Endothelial cell of umbilical vein (primary cell): ENCODE measurements at regions of chr1 and their contacts with region 1.

Region 1: GRCh38 chr1:205141236-205142101 is 19.7 kb upstream of the RBBP5 start:
- DNase-seq: peak; percentile 84
- H3K4me3 ChIP-seq: no peak overlapping the region
- H3K27ac ChIP-seq: no peak overlapping the region
- H3K4me1 ChIP-seq: peaks cover 19% of the 10 kb centered on the region
- H3K27me3 ChIP-seq: no peaks in the 10 kb centered on the region
- CTCF ChIP-seq: peak; percentile 77
- POLR2A ChIP-seq: no peak

Region 2: DNA sequence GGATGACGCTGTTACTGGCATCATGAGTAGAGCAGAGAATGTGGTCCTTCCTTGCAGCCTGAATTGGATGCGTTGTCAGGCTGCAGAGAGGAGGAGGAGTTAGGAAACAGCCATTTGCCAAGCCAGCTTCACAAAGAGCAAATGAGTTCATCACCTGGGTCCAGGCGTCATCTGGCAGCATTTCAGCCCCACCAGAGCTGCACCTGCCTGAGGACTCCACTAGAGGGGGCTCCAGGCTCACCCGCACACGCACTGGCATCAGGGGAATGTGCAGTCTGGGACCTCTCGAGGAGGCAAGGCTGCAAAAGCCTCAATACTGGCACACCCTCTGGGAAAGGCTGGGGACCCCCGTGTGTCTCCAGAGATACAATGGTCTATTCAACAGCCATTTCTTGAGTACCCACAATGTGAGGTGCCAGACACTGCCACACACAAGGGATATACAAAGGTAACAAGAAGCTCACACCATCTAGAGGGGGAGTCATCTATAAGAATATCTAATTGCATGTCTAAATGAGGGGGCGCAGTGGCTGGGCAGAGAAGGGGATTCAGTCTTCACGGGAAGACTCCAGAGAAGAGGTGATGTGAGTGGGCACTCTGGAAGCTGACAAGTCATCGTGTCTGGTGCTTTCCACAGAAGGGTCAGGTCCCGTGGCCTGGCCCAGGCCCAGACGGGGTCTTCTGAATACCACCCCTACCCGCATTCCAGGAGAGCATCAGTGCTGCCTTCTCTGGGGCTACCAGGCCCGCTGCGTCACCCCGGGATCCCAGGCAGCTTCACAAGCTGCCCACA is 152.0 kb before region 1 on chr1:
- CTCF ChIA-PET with region 1: interaction called, 21 read pairs
- POLR2A ChIA-PET with region 1: no interaction called
- dilution Hi-C with region 1: no loop called
- intact Hi-C with region 1: loop called (anchors 1 kb)
- DNase-seq: peak; percentile 76
- H3K4me3 ChIP-seq: no peak overlapping the region
- H3K27ac ChIP-seq: no peak overlapping the region
- H3K4me1 ChIP-seq: no peaks in the 10 kb centered on the region
- H3K27me3 ChIP-seq: peaks cover 0 to 19% of the 10 kb centered on the region in 2 experiments
- CTCF ChIP-seq: peak; percentile 92 to 98
- POLR2A ChIP-seq: no peak

Region 3: GRCh38 chr1:205162301-205162700 is 20.8 kb after region 1 on chr1:
- CTCF ChIA-PET with region 1: interaction called, 17 read pairs
- POLR2A ChIA-PET with region 1: no interaction called
- dilution Hi-C with region 1: no loop called
- intact Hi-C with region 1: no loop called
- DNase-seq: no peak
- H3K4me3 ChIP-seq: no peak overlapping the region
- H3K27ac ChIP-seq: no peak overlapping the region
- H3K4me1 ChIP-seq: no peaks in the 10 kb centered on the region
- H3K27me3 ChIP-seq: no peaks in the 10 kb centered on the region
- CTCF ChIP-seq: no peak
- POLR2A ChIP-seq: no peak

Region 4: GRCh38 chr1:205211169-205211838 is 69.8 kb after region 1 on chr1 and contains the start of gene DSTYK:
- CTCF ChIA-PET with region 1: interaction called, 7 read pairs
- POLR2A ChIA-PET with region 1: no interaction called
- dilution Hi-C with region 1: no loop called
- intact Hi-C with region 1: loop called (anchors 1 kb)
- DNase-seq: peak; percentile 95
- H3K4me3 ChIP-seq: peak within 1 kb of the TSS; percentile 81 to 90 (median 89)
- H3K27ac ChIP-seq: peak within 1 kb of the TSS; percentile 14
- H3K4me1 ChIP-seq: peaks cover 7% of the 10 kb centered on the region
- H3K27me3 ChIP-seq: peaks cover 9 to 15% of the 10 kb centered on the region in 2 experiments
- CTCF ChIP-seq: no peak
- POLR2A ChIP-seq: peak; percentile 54
- total RNA-seq, gene DSTYK: 8.1 and 8.7 TPM in 2 replicates

Region 5: GRCh38 chr1:205321164-205321958 is 179.9 kb after region 1 on chr1 and contains the start of gene NUAK2:
- CTCF ChIA-PET with region 1: interaction called, 5 read pairs
- POLR2A ChIA-PET with region 1: no interaction called
- dilution Hi-C with region 1: no loop called
- intact Hi-C with region 1: loop called (anchors 2 kb)
- DNase-seq: peak; percentile 89
- H3K4me3 ChIP-seq: peak within 1 kb of the TSS; percentile 58 to 68 (median 65)
- H3K27ac ChIP-seq: no peak within 1 kb of the TSS
- H3K4me1 ChIP-seq: peaks cover 18% of the 10 kb centered on the region
- H3K27me3 ChIP-seq: peaks cover 0 to 3% of the 10 kb centered on the region in 2 experiments
- CTCF ChIP-seq: peak; percentile 8 to 43
- POLR2A ChIP-seq: no peak
- total RNA-seq, gene NUAK2: 2.3 and 2.5 TPM in 2 replicates